Activated B cell treated with CpG ODN at 0.5 μM for 24 hours (primary cell): ENCODE measurements at regions of chr7 and their contacts with region 1.

Region 1: GRCh38 chr7:105876091-105876963 is at the start of gene ATXN7L1:
- DNase-seq: peak; percentile 89
- ATAC-seq: peak; percentile 99
- H3K4me3 Mint-ChIP-seq: peak within 1 kb of the TSS; percentile 94
- H3K27ac Mint-ChIP-seq: peak within 1 kb of the TSS; percentile 67
- H3K4me1 Mint-ChIP-seq: peaks cover 23% of the 10 kb centered on the region
- H3K27me3 Mint-ChIP-seq: no peaks in the 10 kb centered on the region
- CTCF ChIP-seq: no peak
- total RNA-seq, gene ATXN7L1: 14.4 and 18.6 TPM in 2 replicates

Region 2: GRCh38 chr7:105454095-105454747 is 422.1 kb before region 1 on chr7:
- CTCF ChIA-PET with region 1: no interaction called
- POLR2A ChIA-PET with region 1: no interaction called
- intact Hi-C with region 1: no loop called
- DNase-seq: no peak
- ATAC-seq: no peak
- H3K4me3 Mint-ChIP-seq: no peak overlapping the region
- H3K27ac Mint-ChIP-seq: no peak overlapping the region
- H3K4me1 Mint-ChIP-seq: peaks cover 33% of the 10 kb centered on the region
- H3K27me3 Mint-ChIP-seq: no peaks in the 10 kb centered on the region
- CTCF ChIP-seq: no peak

Region 3: GRCh38 chr7:105652359-105652993 is 223.9 kb before region 1 on chr7:
- CTCF ChIA-PET with region 1: interaction called, 3 read pairs
- POLR2A ChIA-PET with region 1: no interaction called
- intact Hi-C with region 1: loop called (anchors 2 kb)
- DNase-seq: peak; percentile 45
- ATAC-seq: peak; percentile 94
- H3K4me3 Mint-ChIP-seq: no peak overlapping the region
- H3K27ac Mint-ChIP-seq: no peak overlapping the region
- H3K4me1 Mint-ChIP-seq: peaks cover 2% of the 10 kb centered on the region
- H3K27me3 Mint-ChIP-seq: no peaks in the 10 kb centered on the region
- CTCF ChIP-seq: no peak

Region 4: GRCh38 chr7:105691733-105692564 is 184.4 kb before region 1 on chr7:
- CTCF ChIA-PET with region 1: no interaction called
- POLR2A ChIA-PET with region 1: no interaction called
- intact Hi-C with region 1: loop called (anchors 5 kb)
- DNase-seq: peak; percentile 40
- ATAC-seq: peak; percentile 75
- H3K4me3 Mint-ChIP-seq: peak overlapping the region; percentile 90
- H3K27ac Mint-ChIP-seq: peak overlapping the region; percentile 91
- H3K4me1 Mint-ChIP-seq: peaks cover 40% of the 10 kb centered on the region
- H3K27me3 Mint-ChIP-seq: no peaks in the 10 kb centered on the region
- CTCF ChIP-seq: no peak

Region 5: GRCh38 chr7:105713488-105714465 is 162.6 kb before region 1 on chr7:
- CTCF ChIA-PET with region 1: no interaction called
- POLR2A ChIA-PET with region 1: no interaction called
- intact Hi-C with region 1: no loop called
- DNase-seq: no peak
- ATAC-seq: no peak
- H3K4me3 Mint-ChIP-seq: no peak overlapping the region
- H3K27ac Mint-ChIP-seq: no peak overlapping the region
- H3K4me1 Mint-ChIP-seq: no peaks in the 10 kb centered on the region
- H3K27me3 Mint-ChIP-seq: no peaks in the 10 kb centered on the region
- CTCF ChIP-seq: no peak

Region 6: GRCh38 chr7:105769901-105770628 is 106.3 kb before region 1 on chr7:
- CTCF ChIA-PET with region 1: interaction called, 7 read pairs
- POLR2A ChIA-PET with region 1: interaction called, 5 read pairs
- intact Hi-C with region 1: loop called (anchors 1 kb)
- DNase-seq: no peak
- ATAC-seq: peak; percentile 82
- H3K4me3 Mint-ChIP-seq: peak overlapping the region; percentile 66
- H3K27ac Mint-ChIP-seq: peak overlapping the region; percentile 80
- H3K4me1 Mint-ChIP-seq: peaks cover 49% of the 10 kb centered on the region
- H3K27me3 Mint-ChIP-seq: no peaks in the 10 kb centered on the region
- CTCF ChIP-seq: no peak

Region 7: DNA sequence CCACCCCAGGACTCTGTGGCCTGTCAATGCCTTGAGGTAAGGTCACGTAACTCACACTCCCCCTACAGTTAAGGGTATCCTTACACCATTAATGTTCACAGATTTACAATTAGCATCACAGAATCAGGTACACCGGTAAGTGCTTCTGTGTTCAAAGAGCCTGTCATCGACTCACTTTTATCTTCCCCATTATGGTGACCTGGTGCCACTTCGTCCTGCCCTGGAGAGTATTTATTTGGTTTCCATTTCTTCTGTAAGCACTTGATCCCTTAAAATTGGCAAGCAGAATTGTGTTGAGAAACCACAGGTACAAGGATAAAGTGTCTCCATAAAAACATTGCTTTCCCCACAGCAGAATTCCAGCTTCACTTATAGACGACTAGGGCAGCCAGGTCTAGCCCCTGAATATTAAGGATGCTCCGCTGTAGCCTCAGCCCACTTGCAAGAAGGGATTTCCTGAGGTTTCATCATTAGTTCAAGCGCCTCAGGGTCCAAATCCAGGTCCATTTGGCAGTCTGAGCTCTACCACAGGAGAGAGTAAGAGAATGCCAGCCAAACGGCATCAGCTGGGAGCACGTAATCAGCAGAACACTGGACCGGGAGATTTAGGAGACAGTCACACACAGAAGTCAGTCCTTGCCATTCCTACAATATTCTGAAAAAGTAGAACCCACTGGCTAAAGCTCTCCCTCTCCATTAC is 10.1 kb before region 1 on chr7:
- CTCF ChIA-PET with region 1: no interaction called
- POLR2A ChIA-PET with region 1: no interaction called
- intact Hi-C with region 1: no loop called
- DNase-seq: no peak
- ATAC-seq: no peak
- H3K4me3 Mint-ChIP-seq: no peak overlapping the region
- H3K27ac Mint-ChIP-seq: no peak overlapping the region
- H3K4me1 Mint-ChIP-seq: no peaks in the 10 kb centered on the region
- H3K27me3 Mint-ChIP-seq: no peaks in the 10 kb centered on the region
- CTCF ChIP-seq: no peak

Region 8: GRCh38 chr7:106009403-106010226 is 133.3 kb after region 1 on chr7:
- CTCF ChIA-PET with region 1: no interaction called
- POLR2A ChIA-PET with region 1: no interaction called
- intact Hi-C with region 1: loop called (anchors 1 kb)
- DNase-seq: peak; percentile 73
- ATAC-seq: peak; percentile 98
- H3K4me3 Mint-ChIP-seq: no peak overlapping the region
- H3K27ac Mint-ChIP-seq: no peak overlapping the region
- H3K4me1 Mint-ChIP-seq: peaks cover 22% of the 10 kb centered on the region
- H3K27me3 Mint-ChIP-seq: peaks cover 4% of the 10 kb centered on the region
- CTCF ChIP-seq: no peak

Region 9: DNA sequence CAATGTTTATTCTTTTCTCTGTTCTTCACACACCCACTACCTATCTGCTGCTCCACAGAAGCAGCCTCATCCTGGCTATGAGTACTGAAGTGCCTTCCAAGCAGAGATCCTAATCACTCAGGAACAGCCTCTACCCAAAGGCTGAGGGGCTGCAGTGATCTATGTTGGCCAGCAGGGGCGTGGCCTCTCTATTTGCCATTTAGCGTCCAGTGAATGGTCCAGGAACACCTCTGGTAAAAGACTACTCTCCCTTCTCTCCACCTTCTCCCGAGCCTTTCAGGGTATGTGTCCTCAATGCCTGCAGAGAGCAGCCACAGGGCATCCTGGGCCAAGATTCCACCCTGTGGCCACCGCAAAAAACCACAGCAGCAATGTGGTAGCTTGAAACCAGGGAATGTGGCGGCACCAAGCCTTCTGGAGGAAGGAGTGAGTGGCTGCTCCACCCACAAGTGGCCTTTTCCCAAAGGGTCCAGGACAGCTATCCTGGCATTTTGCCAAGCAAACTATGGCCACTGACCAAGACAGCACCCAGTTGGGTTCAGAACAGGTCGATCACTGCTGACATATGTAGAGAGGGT is 164.9 kb after region 1 on chr7:
- CTCF ChIA-PET with region 1: no interaction called
- POLR2A ChIA-PET with region 1: no interaction called
- intact Hi-C with region 1: loop called (anchors 2 kb)
- DNase-seq: no peak
- ATAC-seq: peak; percentile 66
- H3K4me3 Mint-ChIP-seq: no peak overlapping the region
- H3K27ac Mint-ChIP-seq: no peak overlapping the region
- H3K4me1 Mint-ChIP-seq: peaks cover 19% of the 10 kb centered on the region
- H3K27me3 Mint-ChIP-seq: no peaks in the 10 kb centered on the region
- CTCF ChIP-seq: peak; percentile 53

Region 10: GRCh38 chr7:107047902-107048782 is 1171.8 kb after region 1 on chr7:
- CTCF ChIA-PET with region 1: no interaction called
- POLR2A ChIA-PET with region 1: no interaction called
- intact Hi-C with region 1: no loop called
- DNase-seq: no peak
- ATAC-seq: no peak
- H3K4me3 Mint-ChIP-seq: no peak overlapping the region
- H3K27ac Mint-ChIP-seq: no peak overlapping the region
- H3K4me1 Mint-ChIP-seq: peaks cover 9% of the 10 kb centered on the region
- H3K27me3 Mint-ChIP-seq: peaks cover 27% of the 10 kb centered on the region
- CTCF ChIP-seq: no peak